ENCODE measurements at regions of chr1 and their contacts with region 1.

Region 1: GRCh38 chr1:1115786-1116700 is at the start of gene C1orf159:
- DNase-seq: peak; percentile 100
- ATAC-seq: peak; percentile 97
- H3K4me3 ChIP-seq: peak within 1 kb of the TSS; percentile 87
- H3K27ac ChIP-seq: no peak within 1 kb of the TSS
- H3K4me1 ChIP-seq: 0 out of 2 replicates have a peak, but pooled peaks cover 7% of the 10 kb centered on the region
- H3K27me3 ChIP-seq: no peaks in the 10 kb centered on the region
- CTCF ChIP-seq: no peak
- total RNA-seq, gene C1orf159: 61.7 and 78.0 TPM in 2 replicates

Region 2: GRCh38 chr1:1013105-1013921 is 102.7 kb before region 1 on chr1 and contains the start of gene ISG15:
- CTCF ChIA-PET with region 1: no interaction called
- POLR2A ChIA-PET with region 1: no interaction called
- intact Hi-C with region 1: loop called (anchors 5 kb)
- DNase-seq: peak; percentile 97
- ATAC-seq: peak; percentile 72
- H3K4me3 ChIP-seq: peak within 1 kb of the TSS; percentile 76
- H3K27ac ChIP-seq: peak within 1 kb of the TSS; percentile 66
- H3K4me1 ChIP-seq: peaks cover 23% of the 10 kb centered on the region
- H3K27me3 ChIP-seq: no peaks in the 10 kb centered on the region
- CTCF ChIP-seq: no peak
- total RNA-seq, gene ISG15: 749 and 758 TPM in 2 replicates

Region 3: DNA sequence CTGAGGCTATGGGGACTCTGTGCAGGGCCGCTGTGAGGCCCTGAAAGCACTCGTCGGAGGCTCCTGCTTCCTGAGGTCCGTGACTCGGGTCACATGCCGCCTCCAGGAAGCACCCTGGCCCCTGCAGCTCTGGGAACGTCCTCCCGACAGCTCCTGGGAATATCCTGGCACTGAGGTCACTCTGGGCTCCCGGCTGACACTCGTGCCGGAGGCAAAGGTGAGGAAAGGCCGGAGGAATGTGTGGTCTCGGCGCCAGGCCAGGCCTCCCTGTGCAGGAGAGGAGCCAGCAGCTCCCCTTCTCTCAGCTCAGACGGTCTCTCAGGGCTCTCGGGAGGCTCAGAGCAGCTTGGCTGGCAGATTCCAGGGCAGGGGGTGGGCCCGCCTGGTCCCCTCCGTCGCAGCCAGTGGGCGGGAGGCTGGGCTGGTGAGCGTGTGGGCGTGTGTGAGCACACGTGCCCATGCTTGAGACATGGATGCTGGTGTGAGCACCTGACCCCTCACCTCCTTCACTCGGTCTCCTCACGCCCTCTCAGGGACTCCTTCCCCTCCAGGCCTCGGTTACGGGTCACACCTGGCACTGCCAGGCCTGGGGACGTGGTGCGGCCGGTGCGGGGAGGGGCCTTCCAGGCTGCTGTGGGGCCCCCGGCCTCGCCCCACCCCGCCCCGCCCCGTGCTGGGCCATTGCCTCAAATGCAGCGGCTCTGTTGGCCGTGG is 36.5 kb before region 1 on chr1:
- CTCF ChIA-PET with region 1: no interaction called
- POLR2A ChIA-PET with region 1: no interaction called
- intact Hi-C with region 1: loop called (anchors 1 kb)
- DNase-seq: peak; percentile 99
- ATAC-seq: peak; percentile 73
- H3K4me3 ChIP-seq: peak overlapping the region; percentile 49
- H3K27ac ChIP-seq: peak overlapping the region; percentile 87
- H3K4me1 ChIP-seq: peaks cover 16% of the 10 kb centered on the region
- H3K27me3 ChIP-seq: no peaks in the 10 kb centered on the region
- CTCF ChIP-seq: no peak

Region 4: DNA sequence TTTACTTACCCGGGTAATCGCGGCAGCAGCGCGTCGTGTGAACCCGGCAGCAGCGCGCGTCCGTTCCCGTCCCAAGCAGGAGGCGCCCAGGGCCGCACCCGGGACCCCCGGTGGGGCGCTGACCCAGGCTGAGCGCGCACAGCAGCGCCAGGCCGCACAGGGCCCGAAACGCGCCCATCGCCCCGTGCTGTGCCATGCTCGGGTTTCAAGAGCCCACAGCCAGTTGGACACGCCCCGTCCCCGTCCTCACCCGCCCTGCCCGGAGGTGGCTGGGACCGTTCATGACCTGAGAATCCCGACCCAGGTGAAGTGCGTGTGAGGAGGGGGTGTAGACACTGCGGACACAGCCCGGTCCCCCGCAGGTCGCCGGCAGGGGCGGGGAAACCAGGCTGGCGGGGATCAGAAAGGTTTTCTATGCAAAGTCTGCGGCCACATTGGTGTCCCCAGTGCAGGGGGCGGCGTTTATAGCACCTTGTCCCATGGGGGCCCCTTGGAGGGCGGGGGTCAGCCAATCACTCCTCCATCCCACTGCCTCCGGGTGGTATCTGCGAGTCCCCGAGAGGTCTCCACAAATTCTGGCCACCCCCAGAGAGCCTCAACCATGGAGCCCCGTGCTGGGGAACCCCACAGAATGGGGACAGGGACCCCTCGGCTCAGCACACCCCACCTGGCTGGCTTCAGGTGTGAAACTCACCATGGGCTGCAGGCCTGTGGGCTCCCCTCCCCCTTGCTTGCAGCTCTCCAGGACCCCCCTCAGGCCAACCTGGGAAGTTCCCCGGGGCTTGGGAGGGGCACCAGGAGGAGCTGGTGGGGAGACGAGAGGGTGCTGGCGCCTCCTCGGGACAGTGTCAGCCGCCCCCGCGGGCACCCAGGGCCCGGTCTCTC is 90.6 kb after region 1 on chr1 and contains the start of gene TNFRSF18:
- CTCF ChIA-PET with region 1: no interaction called
- POLR2A ChIA-PET with region 1: interaction called, 6 read pairs
- intact Hi-C with region 1: loop called (anchors 2 kb)
- DNase-seq: peak; percentile 79
- ATAC-seq: peak; percentile 71
- H3K4me3 ChIP-seq: peak within 1 kb of the TSS; percentile 68
- H3K27ac ChIP-seq: no peak within 1 kb of the TSS
- H3K4me1 ChIP-seq: peaks cover 25% of the 10 kb centered on the region
- H3K27me3 ChIP-seq: no peaks in the 10 kb centered on the region
- CTCF ChIP-seq: peak; percentile 31; the same call in 1 of the 2 replicates
- total RNA-seq, gene TNFRSF18: 87.2 and 120 TPM in 2 replicates

Region 5: GRCh38 chr1:1273512-1274298 is 157.7 kb after region 1 on chr1 and contains the start of gene UBE2J2:
- CTCF ChIA-PET with region 1: interaction called, 11 read pairs
- POLR2A ChIA-PET with region 1: no interaction called
- intact Hi-C with region 1: no loop called
- DNase-seq: peak; percentile 91
- ATAC-seq: peak; percentile 80
- H3K4me3 ChIP-seq: peak within 1 kb of the TSS; percentile 96
- H3K27ac ChIP-seq: peak within 1 kb of the TSS; percentile 90
- H3K4me1 ChIP-seq: peaks cover 29% of the 10 kb centered on the region
- H3K27me3 ChIP-seq: no peaks in the 10 kb centered on the region
- CTCF ChIP-seq: no peak
- total RNA-seq, gene UBE2J2: 182 and 200 TPM in 2 replicates

Measured in PC-3 (cell line).